ENCODE measurements at regions of chr7 and their contacts with region 1.

Region 1: DNA sequence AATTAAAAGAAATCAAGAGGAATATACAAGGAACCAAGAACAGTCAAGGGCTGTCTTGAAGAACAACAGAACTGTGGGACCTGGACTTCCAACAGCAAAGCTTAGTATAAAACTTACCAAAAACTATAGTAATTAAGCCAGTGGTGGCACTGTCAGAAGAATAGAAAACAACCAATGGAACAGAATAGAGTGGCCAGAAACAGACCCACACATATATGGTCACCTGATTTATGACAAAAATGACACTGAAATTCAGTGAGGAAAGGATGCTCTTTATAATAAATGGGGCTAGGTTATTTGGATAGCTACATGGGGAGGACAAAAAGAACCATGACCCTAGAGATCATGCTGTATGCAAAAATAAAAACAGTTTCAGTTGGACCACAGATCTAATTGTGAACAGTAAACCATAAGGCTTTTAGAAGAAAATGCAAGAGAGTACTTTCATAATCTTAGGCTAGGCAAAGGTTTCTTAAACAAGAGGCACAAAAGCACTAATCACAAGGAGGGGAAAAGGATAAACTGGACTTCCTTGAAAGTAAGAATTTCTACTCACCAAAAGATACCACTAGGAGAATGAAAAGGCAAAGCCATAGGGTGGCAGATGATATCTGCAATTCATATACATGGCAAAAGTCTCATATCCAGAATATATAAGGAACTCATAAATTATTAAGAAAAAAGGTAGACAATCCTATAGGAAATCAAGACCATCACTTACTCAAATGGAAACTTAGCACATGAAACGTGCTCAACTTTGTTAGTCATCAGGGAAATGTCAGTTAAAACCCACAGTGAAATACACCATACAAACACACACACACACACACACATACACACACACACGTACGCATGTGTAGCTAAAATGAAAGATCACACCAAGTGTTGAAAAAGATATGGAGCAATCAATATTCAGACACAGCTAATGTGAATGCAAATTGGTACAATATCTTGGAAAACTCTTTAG is 20.8 kb downstream of the HYCC1 start:
- DNase-seq: peak; percentile 65
- ATAC-seq: peak; percentile 85
- H3K4me3 ChIP-seq: peak overlapping the region; percentile 50
- H3K27ac ChIP-seq: peak overlapping the region; percentile 68
- H3K4me1 ChIP-seq: peaks cover 29% of the 10 kb centered on the region
- H3K27me3 ChIP-seq: no peaks in the 10 kb centered on the region
- CTCF ChIP-seq: no peak
- EP300 ChIP-seq: peak in 1 of 2 experiments; percentile 19; a peak in 1 of 4 replicates
- POLR2A ChIP-seq: no peak
- RAD21 ChIP-seq: no peak

Region 2: GRCh38 chr7:22822486-22823141 is 170.5 kb before region 1 on chr7 and contains the start of gene TOMM7:
- CTCF ChIA-PET with region 1: no interaction called
- POLR2A ChIA-PET with region 1: no interaction called
- RAD21 ChIA-PET with region 1: no interaction called
- SMC1A ChIA-PET with region 1: interaction called, 3 read pairs
- in situ Hi-C with region 1: no loop called
- intact Hi-C with region 1: loop called (anchors 1 kb)
- DNase-seq: peak; percentile 94
- ATAC-seq: peak; percentile 92
- H3K4me3 ChIP-seq: peak within 1 kb of the TSS; percentile 84
- H3K27ac ChIP-seq: peak within 1 kb of the TSS; percentile 77
- H3K4me1 ChIP-seq: peaks cover 4% of the 10 kb centered on the region
- H3K27me3 ChIP-seq: no peaks in the 10 kb centered on the region
- CTCF ChIP-seq: peak; percentile 35 to 61 (median 36); a peak in 4 of 6 replicates
- EP300 ChIP-seq: no peak
- POLR2A ChIP-seq: peak; percentile 89
- RAD21 ChIP-seq: peak; percentile 14; the same call in 1 of the 2 replicates
- polyA plus RNA-seq, gene TOMM7: 368 to 461 TPM

Region 3: DNA sequence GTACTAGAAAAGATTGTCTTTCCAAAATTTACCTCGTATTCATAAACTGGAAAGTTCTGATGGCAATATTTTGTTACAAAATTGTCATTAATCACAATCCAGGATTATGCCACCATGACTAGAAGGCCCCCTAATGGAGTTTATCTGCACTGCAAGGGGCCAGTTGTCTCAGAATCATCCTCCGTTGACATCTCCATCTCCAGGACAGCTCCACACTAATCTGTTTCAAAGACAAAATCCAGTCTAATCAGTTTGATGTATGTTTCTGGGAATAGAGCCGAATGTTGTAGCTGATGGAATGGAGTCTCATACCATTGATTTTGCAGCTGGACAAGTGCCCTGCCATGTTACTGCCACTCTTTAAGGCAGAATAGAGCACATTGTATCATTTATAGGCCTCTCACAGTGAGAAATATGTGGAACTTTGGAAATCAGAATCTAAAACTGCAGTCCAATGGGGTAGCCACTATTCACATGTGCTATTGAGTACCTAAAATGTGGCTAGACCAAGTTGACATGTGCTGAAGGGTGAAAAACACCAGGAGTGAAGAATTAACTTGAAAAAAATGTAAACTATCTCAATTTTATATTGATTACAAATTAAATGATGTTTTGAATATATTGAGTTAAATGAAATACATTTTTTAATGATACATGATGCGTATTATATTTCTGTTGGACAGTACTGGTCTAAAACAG is 132.2 kb before region 1 on chr7:
- CTCF ChIA-PET with region 1: interaction called, 10 read pairs
- POLR2A ChIA-PET with region 1: interaction called, 5 read pairs
- RAD21 ChIA-PET with region 1: interaction called, 8 read pairs
- SMC1A ChIA-PET with region 1: interaction called, 17 read pairs
- in situ Hi-C with region 1: no loop called
- intact Hi-C with region 1: no loop called
- DNase-seq: no peak
- ATAC-seq: no peak
- H3K4me3 ChIP-seq: no peak overlapping the region
- H3K27ac ChIP-seq: peak overlapping the region; percentile 1; the same call in 1 of the 2 replicates
- H3K4me1 ChIP-seq: peaks cover 10% of the 10 kb centered on the region
- H3K27me3 ChIP-seq: no peaks in the 10 kb centered on the region
- CTCF ChIP-seq: peak; percentile 20 to 59 (median 59); a peak in 5 of 6 replicates
- EP300 ChIP-seq: no peak
- POLR2A ChIP-seq: no peak
- RAD21 ChIP-seq: no peak

Region 4: GRCh38 chr7:22958742-22959141 is 34.4 kb before region 1 on chr7:
- CTCF ChIA-PET with region 1: interaction called, 3 read pairs
- POLR2A ChIA-PET with region 1: no interaction called
- RAD21 ChIA-PET with region 1: interaction called, 3 read pairs
- SMC1A ChIA-PET with region 1: interaction called, 15 read pairs
- in situ Hi-C with region 1: no loop called
- intact Hi-C with region 1: no loop called
- DNase-seq: no peak
- ATAC-seq: peak; percentile 73
- H3K4me3 ChIP-seq: no peak overlapping the region
- H3K27ac ChIP-seq: no peak overlapping the region
- H3K4me1 ChIP-seq: peaks cover 6% of the 10 kb centered on the region; the same call in 1 of the 2 replicates
- H3K27me3 ChIP-seq: no peaks in the 10 kb centered on the region
- CTCF ChIP-seq: no peak
- EP300 ChIP-seq: no peak
- POLR2A ChIP-seq: no peak
- RAD21 ChIP-seq: no peak

Region 5: GRCh38 chr7:22980422-22980821 is 12.7 kb before region 1 on chr7:
- CTCF ChIA-PET with region 1: interaction called, 5 read pairs
- POLR2A ChIA-PET with region 1: no interaction called
- RAD21 ChIA-PET with region 1: interaction called, 3 read pairs
- SMC1A ChIA-PET with region 1: interaction called, 22 read pairs
- in situ Hi-C with region 1: no loop called
- intact Hi-C with region 1: no loop called
- DNase-seq: no peak
- ATAC-seq: no peak
- H3K4me3 ChIP-seq: no peak overlapping the region
- H3K27ac ChIP-seq: no peak overlapping the region
- H3K4me1 ChIP-seq: no peaks in the 10 kb centered on the region
- H3K27me3 ChIP-seq: no peaks in the 10 kb centered on the region
- CTCF ChIP-seq: no peak
- EP300 ChIP-seq: no peak
- POLR2A ChIP-seq: no peak
- RAD21 ChIP-seq: no peak

Region 6: GRCh38 chr7:23721456-23721855 is 728.3 kb after region 1 on chr7:
- CTCF ChIA-PET with region 1: no interaction called
- POLR2A ChIA-PET with region 1: no interaction called
- RAD21 ChIA-PET with region 1: no interaction called
- SMC1A ChIA-PET with region 1: no interaction called
- in situ Hi-C with region 1: no loop called
- intact Hi-C with region 1: no loop called
- DNase-seq: no peak
- ATAC-seq: no peak
- H3K4me3 ChIP-seq: no peak overlapping the region
- H3K27ac ChIP-seq: no peak overlapping the region
- H3K4me1 ChIP-seq: no peaks in the 10 kb centered on the region
- H3K27me3 ChIP-seq: no peaks in the 10 kb centered on the region
- CTCF ChIP-seq: no peak
- EP300 ChIP-seq: no peak
- POLR2A ChIP-seq: no peak
- RAD21 ChIP-seq: no peak